Uterus (tissue), 4 donors: ENCODE measurements at regions of chr22 and their contacts with region 1.

Region 1: GRCh38 chr22:44625981-44626687 is 75.9 kb upstream of the PRR5 start:
- DNase-seq: peak; percentile 69 to 74
- H3K4me3 ChIP-seq: no peak overlapping the region
- H3K27ac ChIP-seq: no peak overlapping the region
- H3K4me1 ChIP-seq: no peaks in the 10 kb centered on the region
- H3K27me3 ChIP-seq: no peaks in the 10 kb centered on the region
- CTCF ChIP-seq: peak; percentile 97 to 99 (median 98)
- POLR2A ChIP-seq: peak in 1 of 2 donors; percentile 31

Region 2: GRCh38 chr22:44080936-44081861 is 544.9 kb before region 1 on chr22:
- intact Hi-C with region 1: loop called (anchors 10 kb)
- DNase-seq: peak; percentile 74 to 79
- H3K4me3 ChIP-seq: no peak overlapping the region
- H3K27ac ChIP-seq: no peak overlapping the region
- H3K4me1 ChIP-seq: peaks cover 0 to 11% of the 10 kb centered on the region in 2 donors
- H3K27me3 ChIP-seq: no peaks in the 10 kb centered on the region
- CTCF ChIP-seq: peak; percentile 70 to 86 (median 80)
- POLR2A ChIP-seq: no peak

Region 3: DNA sequence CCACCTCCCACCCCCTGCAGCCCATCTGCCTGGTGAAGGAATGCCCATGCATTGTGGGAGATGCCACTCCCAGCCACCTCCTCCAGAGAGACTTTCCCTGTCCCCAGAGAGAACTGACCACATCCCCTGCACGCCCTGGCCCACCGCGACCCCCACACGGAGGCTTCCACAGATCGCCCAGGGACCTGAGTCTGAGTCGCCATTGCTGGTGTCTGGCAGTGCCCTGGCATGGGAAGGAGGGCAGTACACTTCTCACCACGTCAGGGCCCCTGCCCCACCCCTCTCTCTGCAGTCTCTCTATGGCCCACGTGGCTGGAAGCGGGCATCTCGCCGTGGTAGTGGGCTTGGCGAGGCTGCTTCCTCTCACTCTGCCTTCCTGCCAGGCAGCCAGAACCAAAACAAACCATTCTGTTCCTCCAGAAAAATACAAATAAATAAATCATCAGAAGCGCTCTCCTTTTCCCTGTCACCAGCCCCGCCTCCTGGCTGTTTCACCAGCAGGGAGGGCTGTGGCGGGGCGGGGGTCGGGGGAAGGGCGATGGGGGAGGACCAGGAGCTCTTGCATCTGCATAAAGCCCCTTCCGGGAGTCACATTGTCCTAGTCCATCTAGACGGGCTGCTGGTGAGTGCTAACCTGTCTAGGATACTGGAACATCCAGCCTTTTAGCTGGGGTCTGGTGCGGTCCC is 334.3 kb before region 1 on chr22:
- intact Hi-C with region 1: no loop called
- DNase-seq: peak; percentile 77 to 91
- H3K4me3 ChIP-seq: no peak overlapping the region
- H3K27ac ChIP-seq: peak overlapping the region; percentile 77 to 85
- H3K4me1 ChIP-seq: peaks cover 19 to 21% of the 10 kb centered on the region in 2 donors
- H3K27me3 ChIP-seq: no peaks in the 10 kb centered on the region
- CTCF ChIP-seq: no peak
- POLR2A ChIP-seq: peak in 1 of 2 donors; percentile 10